ENCODE measurements at regions of chr3 and their contacts with region 1.

Region 1: GRCh38 chr3:106217745-106218144 is 348.9 kb upstream of the CBLB start:
- DNase-seq: no peak
- H3K4me3 Mint-ChIP-seq: no peak overlapping the region
- H3K27ac Mint-ChIP-seq: no peak overlapping the region
- H3K4me1 Mint-ChIP-seq: no peaks in the 10 kb centered on the region
- H3K27me3 Mint-ChIP-seq: no peaks in the 10 kb centered on the region
- CTCF ChIP-seq: no peak

Region 2: DNA sequence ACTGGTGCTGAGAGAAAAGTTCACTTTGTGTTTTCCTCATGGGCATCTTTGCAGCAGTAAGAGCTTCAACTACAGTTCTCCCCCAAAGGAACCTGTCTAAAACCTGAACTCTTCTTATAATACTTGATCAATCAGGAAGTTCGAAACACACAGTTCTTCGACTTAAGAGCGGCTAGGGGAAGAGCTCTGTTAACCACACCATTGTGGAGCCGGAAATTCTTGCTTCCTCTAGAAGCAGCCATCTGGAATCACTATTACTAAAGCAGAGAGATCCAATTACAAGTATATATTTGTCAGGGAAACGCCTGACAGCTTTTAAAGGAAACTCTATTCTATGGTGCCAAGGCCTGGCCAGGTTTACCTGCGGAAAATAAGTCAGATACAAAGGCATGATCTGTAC is 11.6 kb before region 1 on chr3:
- CTCF ChIA-PET with region 1: interaction called, 4 read pairs
- intact Hi-C with region 1: loop called (anchors 1 kb)
- DNase-seq: no peak
- H3K4me3 Mint-ChIP-seq: no peak overlapping the region
- H3K27ac Mint-ChIP-seq: no peak overlapping the region
- H3K4me1 Mint-ChIP-seq: no peaks in the 10 kb centered on the region
- H3K27me3 Mint-ChIP-seq: no peaks in the 10 kb centered on the region
- CTCF ChIP-seq: no peak

Region 3: DNA sequence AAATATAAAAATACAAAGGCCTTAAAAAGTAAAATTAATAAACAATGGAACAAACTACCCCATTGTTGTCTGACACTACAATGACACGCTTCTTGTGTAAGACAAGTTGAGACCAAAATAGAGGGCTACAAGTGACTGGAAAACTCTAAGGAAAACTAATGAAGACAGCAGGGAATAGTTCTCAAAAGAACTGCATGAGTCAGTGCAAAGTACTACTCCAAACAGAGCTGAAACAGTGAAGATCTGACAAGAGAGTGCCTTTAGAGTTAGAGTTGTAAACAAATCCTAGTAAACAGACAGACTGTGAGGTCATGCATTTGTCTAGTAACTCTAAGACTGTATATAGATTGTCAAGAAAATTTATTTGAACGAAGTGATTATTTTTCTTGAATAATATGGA is 1538.9 kb after region 1 on chr3:
- CTCF ChIA-PET with region 1: no interaction called
- intact Hi-C with region 1: no loop called
- DNase-seq: no peak
- H3K4me3 Mint-ChIP-seq: no peak overlapping the region
- H3K27ac Mint-ChIP-seq: no peak overlapping the region
- H3K4me1 Mint-ChIP-seq: peaks cover 6% of the 10 kb centered on the region
- H3K27me3 Mint-ChIP-seq: no peaks in the 10 kb centered on the region
- CTCF ChIP-seq: no peak